Cardiac septum (tissue), 1 donor: ENCODE measurements at regions of chr15 and their contacts with region 1.

Region 1: GRCh38 chr15:84716036-84716799 is at the start of gene SEC11A:
- DNase-seq: peak; percentile 98
- total RNA-seq, gene SEC11A: 63.8 TPM

Region 2: GRCh38 chr15:84748274-84749110 is 32.3 kb after region 1 on chr15 and contains the start of gene ZNF592:
- intact Hi-C with region 1: loop called (anchors 1 kb)
- DNase-seq: peak; percentile 94
- total RNA-seq, gene ZNF592: 25.7 TPM